PC-3 (cell line): ENCODE measurements at regions of chr12 and their contacts with region 1.

Region 1: DNA sequence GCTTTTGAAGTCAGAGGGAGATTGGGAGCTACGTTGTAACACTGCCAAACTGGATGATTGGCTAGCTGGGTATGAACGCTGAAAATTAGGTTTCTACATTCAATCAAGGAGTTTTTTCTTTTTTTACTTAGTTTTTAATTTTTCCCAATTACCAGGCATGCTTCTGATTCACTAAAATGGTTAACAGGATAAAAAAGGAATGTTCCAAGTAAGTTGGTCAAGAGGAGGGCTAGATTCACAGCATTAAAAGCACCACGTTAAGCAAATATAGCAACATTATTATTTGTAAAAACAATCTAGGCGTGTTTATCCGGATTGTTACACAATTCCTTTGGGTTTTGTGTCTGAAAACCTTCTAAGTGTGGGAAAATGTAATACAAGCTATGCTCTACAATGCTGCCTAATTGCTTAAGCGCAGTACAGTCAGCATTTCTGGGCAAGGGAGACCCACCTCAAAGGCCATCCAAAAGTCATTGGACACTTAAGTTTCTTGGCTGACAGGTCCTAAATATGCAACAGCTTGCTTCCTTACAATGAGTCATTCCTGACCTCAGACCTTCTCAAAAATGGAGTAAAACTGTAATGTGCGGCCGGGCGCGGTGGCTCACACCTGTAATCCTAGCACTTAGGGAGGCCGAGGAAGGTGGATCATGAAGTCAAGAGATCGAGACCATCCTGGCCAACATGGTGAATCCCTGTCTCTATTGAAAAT is 1.2 kb downstream of the RPLP0 start:
- DNase-seq: peak; percentile 52
- ATAC-seq: no peak
- H3K4me3 ChIP-seq: peak overlapping the region; percentile 76
- H3K27ac ChIP-seq: peak overlapping the region; percentile 67
- H3K4me1 ChIP-seq: peaks cover 54% of the 10 kb centered on the region
- H3K27me3 ChIP-seq: no peaks in the 10 kb centered on the region
- CTCF ChIP-seq: no peak

Region 2: GRCh38 chr12:120116792-120117651 is 82.7 kb before region 1 on chr12:
- CTCF ChIA-PET with region 1: no interaction called
- POLR2A ChIA-PET with region 1: interaction called, 20 read pairs
- intact Hi-C with region 1: no loop called
- DNase-seq: peak; percentile 97
- ATAC-seq: peak; percentile 65
- H3K4me3 ChIP-seq: peak overlapping the region; percentile 91
- H3K27ac ChIP-seq: peak overlapping the region; percentile 83
- H3K4me1 ChIP-seq: peaks cover 32% of the 10 kb centered on the region
- H3K27me3 ChIP-seq: no peaks in the 10 kb centered on the region
- CTCF ChIP-seq: no peak

Region 3: DNA sequence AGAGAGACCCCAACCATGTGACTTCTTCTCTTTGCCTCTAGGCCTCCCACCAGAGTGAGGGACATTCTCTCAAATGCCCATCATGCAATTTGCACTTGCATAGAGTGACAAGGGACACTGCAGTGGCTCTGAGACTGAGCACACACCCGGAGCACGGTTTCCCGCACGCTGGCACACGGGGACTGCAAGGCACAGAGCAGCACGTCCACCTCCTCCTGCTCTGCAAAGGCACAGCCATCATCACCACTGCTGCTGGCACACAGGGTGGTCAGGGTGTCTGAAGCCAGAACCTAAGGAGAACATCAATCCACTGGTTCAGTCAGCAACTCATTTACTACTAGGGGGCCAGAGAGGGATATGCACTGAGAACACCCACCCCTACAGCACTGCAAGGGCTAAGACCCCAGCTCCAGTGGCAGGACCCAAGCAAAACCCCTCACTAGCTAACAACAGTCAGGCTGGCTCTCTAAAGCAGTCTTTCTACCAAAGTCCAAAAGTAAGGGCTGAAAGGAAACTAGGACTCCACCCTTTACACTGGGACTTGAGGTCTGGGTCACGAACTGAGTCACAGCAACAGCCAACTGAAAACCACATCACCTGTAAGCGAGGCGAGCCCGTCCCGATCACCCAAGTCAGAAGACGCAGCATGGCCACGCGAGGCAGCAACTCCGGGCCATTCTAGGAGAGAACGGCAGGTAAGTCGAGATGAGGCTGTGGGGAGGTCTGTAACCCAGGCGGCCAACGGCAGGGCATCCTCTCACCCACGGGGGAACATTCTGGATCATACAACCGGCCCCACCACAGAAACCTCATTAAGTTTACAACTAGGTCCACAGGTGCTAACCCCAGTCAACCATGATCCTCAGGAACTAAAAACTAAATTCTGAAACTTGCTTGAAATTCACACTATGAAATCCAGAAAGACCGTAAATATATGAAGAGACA is 43.2 kb before region 1 on chr12:
- CTCF ChIA-PET with region 1: no interaction called
- POLR2A ChIA-PET with region 1: interaction called, 18 read pairs
- intact Hi-C with region 1: no loop called
- DNase-seq: no peak
- ATAC-seq: no peak
- H3K4me3 ChIP-seq: no peak overlapping the region
- H3K27ac ChIP-seq: no peak overlapping the region
- H3K4me1 ChIP-seq: no peaks in the 10 kb centered on the region
- H3K27me3 ChIP-seq: no peaks in the 10 kb centered on the region
- CTCF ChIP-seq: no peak

Region 4: DNA sequence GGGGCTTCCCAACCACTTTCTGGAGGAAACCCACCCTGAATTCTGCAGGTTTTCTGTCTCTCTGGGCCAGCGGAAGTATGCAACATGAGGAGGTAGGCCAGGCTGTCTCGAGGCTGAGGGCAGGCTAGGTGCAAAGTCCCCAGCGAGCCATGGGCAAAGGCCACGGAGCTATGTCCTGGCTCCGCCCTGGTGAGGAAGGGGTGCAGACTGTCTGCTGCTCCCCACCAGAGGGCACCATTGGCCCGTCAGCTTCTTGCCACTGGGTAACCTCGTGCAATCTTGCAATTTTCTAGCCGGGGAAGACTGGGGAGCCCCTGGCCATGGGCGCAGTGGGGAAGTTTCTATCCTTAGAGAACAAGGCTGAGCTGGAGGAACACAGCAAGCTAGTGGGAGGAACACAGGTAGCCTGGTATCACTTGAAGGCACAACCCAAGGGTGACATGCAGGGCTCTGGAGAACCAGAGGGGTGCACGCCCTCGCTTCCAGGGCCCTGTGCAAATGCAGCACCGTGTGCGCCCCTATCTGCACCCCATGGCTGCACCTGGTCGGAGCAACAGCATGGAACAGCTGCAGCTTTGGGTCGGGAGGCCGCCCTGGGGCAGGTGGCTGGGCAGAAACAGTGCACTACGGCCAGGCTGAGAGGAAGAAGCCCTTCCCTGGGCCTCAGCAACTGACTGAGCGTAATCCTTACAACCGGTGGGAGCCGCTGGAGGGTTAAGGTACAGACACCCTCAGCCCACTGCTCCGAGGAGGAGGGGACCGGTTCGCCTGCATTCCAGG is 28.7 kb after region 1 on chr12:
- CTCF ChIA-PET with region 1: interaction called, 22 read pairs
- POLR2A ChIA-PET with region 1: interaction called, 60 read pairs
- intact Hi-C with region 1: loop called (anchors 1 kb)
- DNase-seq: peak; percentile 89
- ATAC-seq: peak; percentile 5
- H3K4me3 ChIP-seq: peak overlapping the region; percentile 60
- H3K27ac ChIP-seq: peak overlapping the region; percentile 99
- H3K4me1 ChIP-seq: peaks cover 60% of the 10 kb centered on the region
- H3K27me3 ChIP-seq: no peaks in the 10 kb centered on the region
- CTCF ChIP-seq: peak; percentile 96

Region 5: GRCh38 chr12:120234643-120235368 is 35.1 kb after region 1 on chr12:
- CTCF ChIA-PET with region 1: interaction called, 22 read pairs
- POLR2A ChIA-PET with region 1: interaction called, 60 read pairs
- intact Hi-C with region 1: loop called (anchors 1 kb)
- DNase-seq: peak; percentile 99
- ATAC-seq: peak; percentile 29
- H3K4me3 ChIP-seq: peak overlapping the region; percentile 21; the same call in 1 of the 2 replicates
- H3K27ac ChIP-seq: peak overlapping the region; percentile 93
- H3K4me1 ChIP-seq: peaks cover 84% of the 10 kb centered on the region
- H3K27me3 ChIP-seq: no peaks in the 10 kb centered on the region
- CTCF ChIP-seq: peak; percentile 61

Region 6: DNA sequence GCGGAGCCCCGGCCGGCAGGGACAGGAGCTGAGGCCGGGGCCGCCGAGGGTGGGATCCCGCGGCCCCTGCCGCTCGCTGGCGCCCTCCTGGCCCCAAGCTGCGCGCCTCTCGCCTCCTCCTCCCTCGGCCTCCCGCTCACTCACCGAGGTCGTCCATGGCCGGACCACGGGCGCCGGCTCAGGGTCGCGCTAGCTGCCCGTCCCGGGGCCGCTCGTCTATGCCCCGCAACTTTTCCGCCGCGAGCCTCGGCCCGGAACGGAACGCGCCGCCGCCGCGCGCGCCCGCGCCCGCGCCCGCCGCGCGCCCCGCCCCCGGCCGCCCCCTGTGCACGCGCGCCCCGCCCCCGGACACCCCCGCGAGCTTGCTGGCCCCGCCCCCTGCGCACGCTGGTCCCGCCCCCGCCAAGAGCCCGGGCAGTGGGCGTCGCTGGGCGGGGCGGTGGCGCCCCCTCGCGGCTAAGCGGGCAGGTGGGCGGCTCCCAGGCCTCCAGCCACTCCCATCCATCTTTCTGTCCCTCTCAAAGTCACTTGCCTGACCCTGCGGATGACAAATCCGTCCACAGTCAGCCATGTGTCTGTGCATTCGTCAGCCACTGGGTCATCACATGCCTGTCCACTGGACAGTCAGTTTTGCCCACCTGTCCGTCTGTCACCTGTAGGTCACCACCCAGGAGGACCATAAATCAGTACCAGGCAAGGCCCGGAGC is 65.9 kb after region 1 on chr12 and contains the start of gene PXN:
- CTCF ChIA-PET with region 1: interaction called, 12 read pairs
- POLR2A ChIA-PET with region 1: interaction called, 47 read pairs
- intact Hi-C with region 1: loop called (anchors 1 kb)
- DNase-seq: peak; percentile 89
- ATAC-seq: peak; percentile 41
- H3K4me3 ChIP-seq: peak within 1 kb of the TSS; percentile 91
- H3K27ac ChIP-seq: peak within 1 kb of the TSS; percentile 91
- H3K4me1 ChIP-seq: peaks cover 28% of the 10 kb centered on the region
- H3K27me3 ChIP-seq: no peaks in the 10 kb centered on the region
- CTCF ChIP-seq: peak; percentile 83
- total RNA-seq, gene PXN: 313 and 413 TPM in 2 replicates